ENCODE measurements at regions of chr19 and their contacts with region 1.

Region 1: GRCh38 chr19:45523642-45524256 is 16.5 kb downstream of the VASP start:
- DNase-seq: peak; percentile 70 to 86
- ATAC-seq: peak; percentile 89 to 96 (median 92)
- H3K4me3 ChIP-seq: no peak overlapping the region
- H3K27ac ChIP-seq: peak overlapping the region in 8 of 10 donors; percentile 13 to 69 (median 52)
- H3K4me1 ChIP-seq: peaks cover under 1 to 73% (median 12%) of the 10 kb centered on the region in 9 donors
- H3K27me3 ChIP-seq: no peaks in the 10 kb centered on the region
- CTCF ChIP-seq: peak; percentile 88 to 92 (median 91)

Region 2: GRCh38 chr19:45558399-45558878 is 34.7 kb after region 1 on chr19:
- intact Hi-C with region 1: loop called in 8 of 10 experiments (anchors 5 kb)
- DNase-seq: peak in 1 of 2 donors; percentile 29
- ATAC-seq: peak in 5 of 8 donors; percentile 36 to 52 (median 44)
- H3K4me3 ChIP-seq: no peak overlapping the region
- H3K27ac ChIP-seq: no peak overlapping the region
- H3K4me1 ChIP-seq: peaks cover 0 to 45% (median 23%) of the 10 kb centered on the region in 9 donors
- H3K27me3 ChIP-seq: no peaks in the 10 kb centered on the region
- CTCF ChIP-seq: peak; percentile 13 to 73 (median 60)

Region 3: DNA sequence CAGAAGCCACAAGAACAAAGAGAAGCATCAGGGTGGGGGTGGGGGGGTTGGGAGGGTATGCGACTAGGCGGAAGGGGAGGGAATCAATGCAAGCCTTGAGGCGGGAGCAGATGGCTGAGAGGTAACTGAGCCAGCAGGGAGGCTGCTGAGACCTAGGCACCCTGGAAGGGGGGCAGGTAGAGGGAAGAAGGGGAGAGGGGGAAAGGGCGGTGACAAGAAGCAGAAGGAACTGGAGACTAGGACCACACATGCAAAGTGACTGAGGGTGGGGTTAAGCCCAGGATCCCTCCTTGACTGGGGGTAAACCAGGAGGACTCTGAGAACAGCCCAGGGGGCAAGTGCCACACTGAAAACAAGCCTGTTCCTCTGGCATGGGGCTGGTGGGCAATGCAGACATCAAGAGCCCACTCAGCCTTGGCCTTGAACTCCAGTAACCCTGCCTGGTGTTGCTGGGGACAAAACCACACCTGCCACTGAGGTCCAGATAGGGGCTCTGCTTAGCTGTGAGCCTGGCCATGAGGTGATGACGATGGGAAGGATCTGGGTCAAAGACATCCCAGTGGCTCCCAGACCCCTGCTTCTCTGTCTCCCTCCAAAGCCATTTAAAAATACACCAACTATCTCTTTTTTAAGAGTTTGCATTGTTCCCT is 40.5 kb after region 1 on chr19:
- intact Hi-C with region 1: loop called in 9 of 10 experiments (anchors 5 kb)
- DNase-seq: no peak
- ATAC-seq: no peak
- H3K4me3 ChIP-seq: no peak overlapping the region
- H3K27ac ChIP-seq: no peak overlapping the region
- H3K4me1 ChIP-seq: peaks cover 0 to 43% (median 29%) of the 10 kb centered on the region in 9 donors
- H3K27me3 ChIP-seq: no peaks in the 10 kb centered on the region
- CTCF ChIP-seq: no peak

Region 4: GRCh38 chr19:45569619-45570421 is 46.1 kb after region 1 on chr19:
- intact Hi-C with region 1: loop called in 3 of 10 experiments (anchors 1 to 5 kb)
- DNase-seq: peak; percentile 45 to 73
- ATAC-seq: peak; percentile 61 to 83 (median 72)
- H3K4me3 ChIP-seq: no peak overlapping the region
- H3K27ac ChIP-seq: peak overlapping the region; percentile 4 to 84 (median 69)
- H3K4me1 ChIP-seq: peaks cover 2 to 43% (median 27%) of the 10 kb centered on the region in 9 donors
- H3K27me3 ChIP-seq: no peaks in the 10 kb centered on the region
- CTCF ChIP-seq: peak; percentile 65 to 80 (median 74)

Measured in heart right ventricle (tissue), 16 donors.